ENCODE measurements at regions of chr10 and their contacts with region 1.

Region 1: GRCh38 chr10:62050893-62051433 is 149.5 kb downstream of the ARID5B start:
- DNase-seq: peak; percentile 82
- ATAC-seq: peak; percentile 69
- H3K4me3 ChIP-seq: peak overlapping the region in 4 of 5 experiments; percentile 39 to 60 (median 44)
- H3K4me3 Mint-ChIP-seq: peak overlapping the region; percentile 85
- H3K27ac ChIP-seq: peak overlapping the region; percentile 85 to 92
- H3K27ac Mint-ChIP-seq: peak overlapping the region; percentile 86
- H3K4me1 ChIP-seq: peaks cover 92 to 96% of the 10 kb centered on the region in 2 donors
- H3K4me1 Mint-ChIP-seq: peaks cover 96% of the 10 kb centered on the region
- H3K27me3 ChIP-seq: no peaks in the 10 kb centered on the region
- H3K27me3 Mint-ChIP-seq: no peaks in the 10 kb centered on the region
- CTCF ChIP-seq: no peak

Region 2: DNA sequence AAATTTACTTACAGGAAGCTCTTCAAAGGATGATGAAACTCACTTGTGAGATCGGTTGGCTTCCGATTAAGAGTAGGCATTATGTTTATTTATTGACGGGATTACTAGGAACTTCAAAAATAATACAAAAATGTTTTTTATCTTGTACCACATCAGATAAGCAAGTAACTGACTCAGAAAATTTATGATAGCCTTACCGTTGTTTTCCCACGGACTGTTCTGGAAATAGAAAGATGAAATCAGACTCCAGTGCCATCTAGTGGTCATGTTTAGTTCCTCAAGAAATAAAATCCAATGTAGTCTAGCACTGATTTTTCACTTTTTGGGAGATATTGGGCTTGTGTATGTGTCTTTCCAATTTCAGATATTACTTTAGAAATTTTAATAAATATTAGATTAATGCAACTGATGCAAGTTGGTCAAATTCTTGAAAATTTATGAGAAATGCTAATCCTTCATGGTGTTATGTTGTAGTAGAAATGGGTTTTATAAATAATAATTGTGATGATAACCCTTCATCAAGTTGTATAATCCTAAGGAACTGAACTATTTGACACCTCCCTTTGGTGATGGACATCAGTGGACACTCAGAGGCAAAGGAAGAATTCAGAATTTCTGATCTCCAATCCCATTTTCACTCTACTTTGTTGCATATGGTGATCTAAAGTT is 766.6 kb before region 1 on chr10:
- CTCF ChIA-PET with region 1: no interaction called
- POLR2A ChIA-PET with region 1: no interaction called
- intact Hi-C with region 1: loop called (anchors 10 kb)
- DNase-seq: peak; percentile 64
- ATAC-seq: no peak
- H3K4me3 ChIP-seq: no peak overlapping the region
- H3K4me3 Mint-ChIP-seq: peak overlapping the region; percentile 30
- H3K27ac ChIP-seq: no peak overlapping the region
- H3K27ac Mint-ChIP-seq: no peak overlapping the region
- H3K4me1 ChIP-seq: peaks cover 20 to 26% of the 10 kb centered on the region in 2 donors
- H3K4me1 Mint-ChIP-seq: peaks cover 31% of the 10 kb centered on the region
- H3K27me3 ChIP-seq: no peaks in the 10 kb centered on the region
- H3K27me3 Mint-ChIP-seq: no peaks in the 10 kb centered on the region
- CTCF ChIP-seq: peak; percentile 93

Region 3: GRCh38 chr10:61896854-61897661 is 153.9 kb before region 1 on chr10:
- CTCF ChIA-PET with region 1: interaction called, 32 read pairs
- POLR2A ChIA-PET with region 1: interaction called, 24 read pairs
- intact Hi-C with region 1: loop called (anchors 2 kb)
- DNase-seq: peak; percentile 91
- ATAC-seq: peak; percentile 64
- H3K4me3 ChIP-seq: peak overlapping the region in 4 of 5 experiments; percentile 27 to 60 (median 48)
- H3K4me3 Mint-ChIP-seq: peak overlapping the region; percentile 98
- H3K27ac ChIP-seq: peak overlapping the region; percentile 38 to 47
- H3K27ac Mint-ChIP-seq: peak overlapping the region; percentile 94
- H3K4me1 ChIP-seq: peaks cover 29 to 33% of the 10 kb centered on the region in 2 donors
- H3K4me1 Mint-ChIP-seq: peaks cover 35% of the 10 kb centered on the region
- H3K27me3 ChIP-seq: no peaks in the 10 kb centered on the region
- H3K27me3 Mint-ChIP-seq: no peaks in the 10 kb centered on the region
- CTCF ChIP-seq: peak; percentile 77

Region 4: DNA sequence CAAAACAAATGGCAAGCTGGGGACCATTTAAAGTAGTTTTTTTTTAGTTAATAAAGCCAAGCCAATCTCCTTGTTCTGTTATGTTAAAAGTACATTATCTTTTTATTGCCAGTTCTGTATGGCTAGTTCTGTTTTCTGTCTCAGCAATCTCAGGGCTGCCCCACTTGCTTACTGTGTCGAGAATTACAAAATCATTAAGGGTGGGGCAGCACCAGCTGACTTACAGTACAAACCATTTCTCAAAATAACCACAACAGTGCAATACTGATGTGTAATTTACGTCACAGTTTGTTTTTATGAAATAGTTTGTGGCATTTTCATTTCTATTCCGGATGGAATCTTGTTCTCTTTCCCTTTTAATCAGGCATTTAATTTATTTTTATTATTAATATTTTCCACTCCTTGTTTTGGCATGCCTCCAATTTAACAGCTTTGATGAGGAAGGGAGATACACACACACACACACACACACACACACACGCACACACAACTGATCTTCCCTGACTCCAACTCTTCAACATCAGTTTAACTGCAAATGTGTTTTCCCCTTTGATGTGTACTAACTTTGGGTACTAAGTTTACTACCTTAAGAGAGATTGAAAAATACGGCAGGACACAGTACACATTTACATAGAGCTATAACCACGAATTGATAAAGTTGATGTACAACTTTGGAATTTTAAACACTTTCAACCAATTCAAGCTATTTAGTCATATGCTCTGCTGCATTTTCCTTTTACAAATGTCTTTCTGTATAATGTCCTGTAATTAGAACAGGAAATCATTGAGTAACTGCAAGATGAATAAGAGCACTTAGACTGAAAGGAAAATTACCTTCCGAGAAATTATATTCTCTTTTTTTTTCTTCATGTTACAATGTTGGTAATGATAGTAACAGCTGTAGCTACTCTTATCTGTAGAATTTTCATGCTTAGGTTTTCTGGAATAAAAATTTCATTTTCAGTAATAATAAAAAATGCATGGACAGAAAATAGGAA is 58.0 kb before region 1 on chr10:
- CTCF ChIA-PET with region 1: interaction called, 7 read pairs
- POLR2A ChIA-PET with region 1: interaction called, 10 read pairs
- intact Hi-C with region 1: loop called (anchors 2 kb)
- DNase-seq: peak; percentile 86
- ATAC-seq: peak; percentile 77
- H3K4me3 ChIP-seq: peak overlapping the region in 1 of 5 experiments; percentile 42
- H3K4me3 Mint-ChIP-seq: peak overlapping the region; percentile 73
- H3K27ac ChIP-seq: peak overlapping the region; percentile 74 to 80
- H3K27ac Mint-ChIP-seq: peak overlapping the region; percentile 92
- H3K4me1 ChIP-seq: peaks cover 48 to 58% of the 10 kb centered on the region in 2 donors
- H3K4me1 Mint-ChIP-seq: peaks cover 85% of the 10 kb centered on the region
- H3K27me3 ChIP-seq: no peaks in the 10 kb centered on the region
- H3K27me3 Mint-ChIP-seq: no peaks in the 10 kb centered on the region
- CTCF ChIP-seq: no peak

Region 5: GRCh38 chr10:62016623-62017490 is 34.1 kb before region 1 on chr10:
- CTCF ChIA-PET with region 1: interaction called, 5 read pairs
- POLR2A ChIA-PET with region 1: interaction called, 5 read pairs
- intact Hi-C with region 1: loop called (anchors 2 kb)
- DNase-seq: peak; percentile 88
- ATAC-seq: peak; percentile 71
- H3K4me3 ChIP-seq: peak overlapping the region in 3 of 5 experiments; percentile 10 to 50 (median 11)
- H3K4me3 Mint-ChIP-seq: peak overlapping the region; percentile 76
- H3K27ac ChIP-seq: peak overlapping the region; percentile 94 to 98
- H3K27ac Mint-ChIP-seq: peak overlapping the region; percentile 93
- H3K4me1 ChIP-seq: peaks cover 75 to 76% of the 10 kb centered on the region in 2 donors
- H3K4me1 Mint-ChIP-seq: peaks cover 80% of the 10 kb centered on the region
- H3K27me3 ChIP-seq: no peaks in the 10 kb centered on the region
- H3K27me3 Mint-ChIP-seq: no peaks in the 10 kb centered on the region
- CTCF ChIP-seq: no peak

Region 6: DNA sequence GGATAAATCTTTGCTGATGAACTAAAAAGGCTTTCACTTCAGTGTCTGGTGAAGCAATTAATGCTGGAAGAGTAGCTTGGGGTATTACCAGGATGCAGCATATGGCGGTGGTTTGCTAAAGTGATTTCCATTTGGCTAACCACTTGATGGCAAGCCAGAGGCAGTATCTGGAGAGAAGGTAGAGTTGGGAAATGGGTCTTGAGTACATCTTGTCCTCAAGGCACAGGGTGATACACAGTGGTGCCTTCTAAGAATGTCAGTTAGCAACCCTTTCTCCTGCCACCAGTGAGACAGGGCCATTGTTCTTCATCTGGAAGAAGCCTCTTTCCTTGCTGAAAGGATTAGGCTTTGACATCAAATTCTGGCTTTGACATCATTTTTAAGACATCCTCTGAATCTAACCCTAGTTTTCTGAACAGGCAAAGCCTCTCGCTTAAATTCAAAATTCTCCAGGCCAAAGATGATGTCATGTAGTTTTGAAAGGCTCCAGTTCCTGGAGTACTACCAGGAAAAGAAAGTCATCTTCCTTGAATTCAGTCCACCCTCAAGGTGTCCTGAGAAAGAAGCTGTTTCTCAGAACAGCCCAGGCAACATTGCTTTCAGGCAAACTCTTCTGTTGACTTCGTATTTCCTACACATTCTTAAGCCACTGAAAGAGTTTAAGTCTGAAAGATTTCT is 13.0 kb after region 1 on chr10:
- CTCF ChIA-PET with region 1: interaction called, 8 read pairs
- POLR2A ChIA-PET with region 1: no interaction called
- intact Hi-C with region 1: loop called (anchors 2 kb)
- DNase-seq: no peak
- ATAC-seq: no peak
- H3K4me3 ChIP-seq: no peak overlapping the region
- H3K4me3 Mint-ChIP-seq: no peak overlapping the region
- H3K27ac ChIP-seq: peak overlapping the region in 1 of 2 donors; percentile 19
- H3K27ac Mint-ChIP-seq: peak overlapping the region; percentile 37
- H3K4me1 ChIP-seq: peaks cover 19 to 21% of the 10 kb centered on the region in 2 donors
- H3K4me1 Mint-ChIP-seq: peaks cover 61% of the 10 kb centered on the region
- H3K27me3 ChIP-seq: no peaks in the 10 kb centered on the region
- H3K27me3 Mint-ChIP-seq: no peaks in the 10 kb centered on the region
- CTCF ChIP-seq: no peak

Region 7: DNA sequence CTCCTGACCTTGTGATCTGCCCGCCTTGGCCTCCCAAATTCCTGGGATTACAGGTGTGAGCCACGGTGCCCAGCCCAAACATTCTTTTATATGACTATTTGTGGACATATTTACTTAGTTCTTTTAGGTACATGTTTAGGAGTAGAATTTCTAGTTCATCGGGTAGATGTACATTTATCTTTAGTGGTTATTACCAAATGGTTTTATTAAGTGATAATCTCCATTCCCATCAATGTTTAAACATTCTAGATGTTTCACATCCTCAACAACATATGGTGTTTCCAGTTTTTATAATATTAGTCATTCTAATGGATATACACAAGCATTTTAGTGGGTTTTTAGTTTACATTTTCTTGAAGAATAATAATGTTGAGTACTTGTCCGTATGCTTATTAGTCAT is 85.9 kb after region 1 on chr10:
- CTCF ChIA-PET with region 1: no interaction called
- POLR2A ChIA-PET with region 1: no interaction called
- intact Hi-C with region 1: no loop called
- DNase-seq: no peak
- ATAC-seq: no peak
- H3K4me3 ChIP-seq: no peak overlapping the region
- H3K4me3 Mint-ChIP-seq: no peak overlapping the region
- H3K27ac ChIP-seq: no peak overlapping the region
- H3K27ac Mint-ChIP-seq: no peak overlapping the region
- H3K4me1 ChIP-seq: no peaks in the 10 kb centered on the region
- H3K4me1 Mint-ChIP-seq: no peaks in the 10 kb centered on the region
- H3K27me3 ChIP-seq: no peaks in the 10 kb centered on the region
- H3K27me3 Mint-ChIP-seq: no peaks in the 10 kb centered on the region
- CTCF ChIP-seq: no peak

Region 8: GRCh38 chr10:62335326-62335725 is 284.4 kb after region 1 on chr10:
- CTCF ChIA-PET with region 1: no interaction called
- POLR2A ChIA-PET with region 1: no interaction called
- intact Hi-C with region 1: loop called (anchors 10 kb)
- DNase-seq: peak; percentile 42
- ATAC-seq: no peak
- H3K4me3 ChIP-seq: no peak overlapping the region
- H3K4me3 Mint-ChIP-seq: peak overlapping the region; percentile 12
- H3K27ac ChIP-seq: no peak overlapping the region
- H3K27ac Mint-ChIP-seq: peak overlapping the region; percentile 42
- H3K4me1 ChIP-seq: peaks cover 16 to 34% of the 10 kb centered on the region in 2 donors
- H3K4me1 Mint-ChIP-seq: peaks cover 28% of the 10 kb centered on the region
- H3K27me3 ChIP-seq: no peaks in the 10 kb centered on the region
- H3K27me3 Mint-ChIP-seq: no peaks in the 10 kb centered on the region
- CTCF ChIP-seq: no peak